Common myeloid progenitor, CD34-positive (primary cell): ENCODE measurements at regions of chr18 and their contacts with region 1.

Region 1: DNA sequence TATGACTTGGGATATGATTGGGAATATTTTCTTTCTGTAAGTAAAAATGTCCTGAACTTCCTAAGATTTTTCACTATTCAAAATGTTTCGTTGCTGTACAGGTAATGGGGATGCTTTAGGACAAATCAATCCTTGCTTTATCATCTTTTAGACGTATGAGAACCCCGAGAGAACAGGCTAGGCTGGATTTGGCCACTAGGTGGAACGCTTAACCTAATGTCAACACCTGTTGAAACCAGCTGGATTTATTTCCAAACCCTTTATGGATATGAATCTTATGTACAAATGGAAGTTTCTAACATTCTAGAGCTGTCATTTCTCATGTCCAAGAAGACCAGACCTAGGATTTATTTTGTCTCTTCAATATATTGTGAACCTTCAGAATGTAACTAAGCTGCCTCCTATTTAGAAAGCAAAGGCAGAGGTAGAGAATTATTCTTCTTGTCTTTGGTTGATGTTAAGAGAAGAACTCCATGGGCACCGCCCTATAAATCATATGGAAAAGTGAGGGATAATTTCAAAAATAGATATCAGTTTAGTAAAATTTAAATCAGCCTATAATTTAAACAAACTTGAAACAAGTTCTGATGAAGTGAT is 96.7 kb downstream of the PMAIP1 start:
- DNase-seq: peak; percentile 23 to 58 (median 54)
- H3K4me3 ChIP-seq: no peak overlapping the region
- H3K27ac ChIP-seq: no peak overlapping the region
- H3K4me1 ChIP-seq: no peaks in the 10 kb centered on the region
- H3K27me3 ChIP-seq: peaks cover 0 to 29% (median 18%) of the 10 kb centered on the region in 5 experiments

Region 2: DNA sequence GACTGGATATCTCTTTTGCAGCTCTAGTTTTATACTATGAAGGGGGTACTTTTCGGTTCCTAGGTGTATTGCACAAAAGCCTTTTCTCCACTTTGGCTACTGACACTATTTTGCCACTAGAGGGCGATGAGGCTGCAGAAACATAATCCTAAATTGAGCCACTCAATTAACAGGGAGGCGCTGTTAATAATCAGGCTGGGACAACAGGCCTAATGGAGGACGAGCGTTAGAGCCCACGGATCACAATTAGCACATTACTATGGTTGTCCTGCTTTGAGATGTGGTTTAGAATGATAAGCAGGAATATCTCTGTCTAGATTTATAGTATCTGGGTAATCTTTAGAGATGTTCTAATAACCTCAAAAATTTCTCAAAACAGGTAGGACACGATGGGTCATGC is 158.9 kb before region 1 on chr18:
- CTCF ChIA-PET with region 1: interaction called, 25 read pairs
- POLR2A ChIA-PET with region 1: no interaction called
- DNase-seq: peak; percentile 77 to 83 (median 78)
- H3K4me3 ChIP-seq: no peak overlapping the region
- H3K27ac ChIP-seq: no peak overlapping the region
- H3K4me1 ChIP-seq: no peaks in the 10 kb centered on the region
- H3K27me3 ChIP-seq: peaks cover 0 to 2% (median 0%) of the 10 kb centered on the region in 5 experiments

Region 3: GRCh38 chr18:60163622-60164021 is 167.2 kb after region 1 on chr18:
- CTCF ChIA-PET with region 1: no interaction called
- POLR2A ChIA-PET with region 1: no interaction called
- DNase-seq: no peak
- H3K4me3 ChIP-seq: no peak overlapping the region
- H3K27ac ChIP-seq: no peak overlapping the region
- H3K4me1 ChIP-seq: peaks cover 3 to 14% (median 9%) of the 10 kb centered on the region in 4 experiments
- H3K27me3 ChIP-seq: no peaks in the 10 kb centered on the region

Region 4: GRCh38 chr18:60549338-60549960 is 553.0 kb after region 1 on chr18:
- CTCF ChIA-PET with region 1: interaction called, 29 read pairs
- POLR2A ChIA-PET with region 1: no interaction called
- DNase-seq: peak; percentile 66 to 84 (median 82)
- H3K4me3 ChIP-seq: no peak overlapping the region
- H3K27ac ChIP-seq: no peak overlapping the region
- H3K4me1 ChIP-seq: no peaks in the 10 kb centered on the region
- H3K27me3 ChIP-seq: no peaks in the 10 kb centered on the region

Region 5: DNA sequence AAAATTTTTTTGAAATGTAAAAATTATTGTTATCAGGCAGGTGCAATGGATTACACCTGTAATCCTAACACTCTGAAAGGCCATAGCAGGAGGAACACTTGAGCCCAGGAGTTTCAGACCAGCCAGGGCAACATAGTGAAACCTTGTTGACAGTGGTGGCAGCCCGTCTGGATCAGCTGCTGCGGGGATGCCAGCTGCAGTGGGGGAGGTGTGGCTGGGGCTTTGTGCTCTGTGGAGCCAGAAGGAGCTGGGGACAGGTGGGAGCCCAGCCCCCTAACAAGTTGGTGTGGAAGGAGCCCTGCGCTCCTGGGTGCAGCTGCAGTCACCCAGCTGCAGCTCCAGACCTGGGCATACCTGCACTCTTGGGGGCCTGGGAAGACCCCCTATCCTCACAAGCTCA is 558.5 kb after region 1 on chr18:
- CTCF ChIA-PET with region 1: interaction called, 29 read pairs
- POLR2A ChIA-PET with region 1: no interaction called
- DNase-seq: no peak
- H3K4me3 ChIP-seq: no peak overlapping the region
- H3K27ac ChIP-seq: no peak overlapping the region
- H3K4me1 ChIP-seq: no peaks in the 10 kb centered on the region
- H3K27me3 ChIP-seq: peaks cover 0 to 1% (median 0%) of the 10 kb centered on the region in 5 experiments